ENCODE measurements at regions of chr2 and their contacts with region 1.

Region 1: GRCh38 chr2:227853204-227853629 is 18.2 kb upstream of the DAW1 start:
- DNase-seq: peak; percentile 100
- H3K4me3 ChIP-seq: no peak overlapping the region
- CTCF ChIP-seq: no peak

Region 2: GRCh38 chr2:227783404-227784138 is 69.6 kb before region 1 on chr2:
- in situ Hi-C with region 1: loop called (anchors 5 kb)
- DNase-seq: no peak
- H3K4me3 ChIP-seq: no peak overlapping the region
- CTCF ChIP-seq: no peak

Region 3: GRCh38 chr2:227796045-227796711 is 57.0 kb before region 1 on chr2:
- in situ Hi-C with region 1: no loop called
- DNase-seq: no peak
- H3K4me3 ChIP-seq: no peak overlapping the region
- CTCF ChIP-seq: no peak

Region 4: DNA sequence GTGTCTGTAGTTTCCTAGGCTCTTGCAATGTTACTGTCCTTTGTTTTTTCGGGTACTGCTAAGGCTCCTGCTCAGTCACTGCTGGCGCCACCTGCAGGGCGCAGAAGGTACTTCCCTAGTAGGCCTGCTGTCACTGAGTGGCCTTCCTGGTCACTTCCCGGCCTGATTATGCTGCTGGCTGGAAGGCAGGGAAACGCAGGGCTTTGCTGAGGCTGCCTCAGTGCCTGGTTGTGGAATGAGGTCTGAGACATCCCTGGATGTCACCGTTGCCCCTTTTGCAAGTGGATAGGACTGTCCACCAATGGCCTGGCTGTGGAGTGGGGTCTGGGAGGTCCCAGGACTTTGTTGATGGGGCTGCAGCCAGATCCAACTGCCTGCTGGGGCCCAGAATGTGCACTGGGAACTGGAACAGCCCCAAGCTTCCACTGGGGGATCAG is 31.3 kb after region 1 on chr2:
- in situ Hi-C with region 1: no loop called
- DNase-seq: no peak
- H3K4me3 ChIP-seq: no peak overlapping the region
- CTCF ChIP-seq: peak; percentile 91

Region 5: GRCh38 chr2:227908261-227909054 is 55.2 kb after region 1 on chr2:
- in situ Hi-C with region 1: no loop called
- DNase-seq: no peak
- H3K4me3 ChIP-seq: no peak overlapping the region
- CTCF ChIP-seq: no peak

Region 6: DNA sequence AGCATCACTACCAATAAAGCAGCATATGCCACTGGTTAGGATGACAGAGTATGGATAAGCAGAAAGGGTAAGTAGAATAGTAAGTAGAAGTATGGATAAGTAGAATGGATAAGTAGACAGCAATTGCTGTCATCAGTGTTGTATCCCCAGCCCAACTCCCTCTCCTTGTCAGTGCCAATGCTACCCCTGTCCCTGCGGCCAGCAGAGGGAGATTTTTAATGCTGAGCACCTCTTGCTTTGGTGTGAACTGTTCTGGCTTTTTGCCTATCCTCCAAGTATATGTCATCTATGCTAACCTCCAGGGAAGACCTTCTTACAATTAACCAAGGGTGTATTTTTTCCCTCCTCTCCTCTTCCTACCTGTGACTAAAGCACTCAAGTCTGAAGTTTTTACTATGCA is 465.0 kb after region 1 on chr2:
- in situ Hi-C with region 1: no loop called
- DNase-seq: no peak
- H3K4me3 ChIP-seq: no peak overlapping the region
- CTCF ChIP-seq: peak; percentile 39

Measured in astrocyte of the cerebellum (primary cell).